ENCODE measurements at regions of chr3 and their contacts with region 1.

Region 1: GRCh38 chr3:169218314-169218983 is 445.1 kb downstream of the MECOM start:
- DNase-seq: peak; percentile 67
- H3K4me3 ChIP-seq: no peak overlapping the region
- H3K4me3 Mint-ChIP-seq: no peak overlapping the region
- H3K27ac Mint-ChIP-seq: no peak overlapping the region
- H3K4me1 ChIP-seq: no peaks in the 10 kb centered on the region
- H3K4me1 Mint-ChIP-seq: no peaks in the 10 kb centered on the region
- H3K27me3 ChIP-seq: no peaks in the 10 kb centered on the region
- H3K27me3 Mint-ChIP-seq: no peaks in the 10 kb centered on the region
- CTCF ChIP-seq: peak; percentile 51 to 79

Region 2: GRCh38 chr3:169232863-169233262 is 14.4 kb after region 1 on chr3:
- CTCF ChIA-PET with region 1: no interaction called
- POLR2A ChIA-PET with region 1: no interaction called
- intact Hi-C with region 1: no loop called
- DNase-seq: no peak
- H3K4me3 ChIP-seq: no peak overlapping the region
- H3K4me3 Mint-ChIP-seq: no peak overlapping the region
- H3K27ac Mint-ChIP-seq: no peak overlapping the region
- H3K4me1 ChIP-seq: no peaks in the 10 kb centered on the region
- H3K4me1 Mint-ChIP-seq: no peaks in the 10 kb centered on the region
- H3K27me3 ChIP-seq: no peaks in the 10 kb centered on the region
- H3K27me3 Mint-ChIP-seq: no peaks in the 10 kb centered on the region
- CTCF ChIP-seq: no peak

Region 3: GRCh38 chr3:169295126-169295525 is 76.7 kb after region 1 on chr3:
- CTCF ChIA-PET with region 1: no interaction called
- POLR2A ChIA-PET with region 1: no interaction called
- intact Hi-C with region 1: loop called (anchors 1 kb)
- DNase-seq: peak in 1 of 2 experiments; percentile 23
- H3K4me3 ChIP-seq: no peak overlapping the region
- H3K4me3 Mint-ChIP-seq: no peak overlapping the region
- H3K27ac Mint-ChIP-seq: no peak overlapping the region
- H3K4me1 ChIP-seq: no peaks in the 10 kb centered on the region
- H3K4me1 Mint-ChIP-seq: peaks cover 23% of the 10 kb centered on the region
- H3K27me3 ChIP-seq: no peaks in the 10 kb centered on the region
- H3K27me3 Mint-ChIP-seq: no peaks in the 10 kb centered on the region
- CTCF ChIP-seq: peak; percentile 19 to 43

Region 4: DNA sequence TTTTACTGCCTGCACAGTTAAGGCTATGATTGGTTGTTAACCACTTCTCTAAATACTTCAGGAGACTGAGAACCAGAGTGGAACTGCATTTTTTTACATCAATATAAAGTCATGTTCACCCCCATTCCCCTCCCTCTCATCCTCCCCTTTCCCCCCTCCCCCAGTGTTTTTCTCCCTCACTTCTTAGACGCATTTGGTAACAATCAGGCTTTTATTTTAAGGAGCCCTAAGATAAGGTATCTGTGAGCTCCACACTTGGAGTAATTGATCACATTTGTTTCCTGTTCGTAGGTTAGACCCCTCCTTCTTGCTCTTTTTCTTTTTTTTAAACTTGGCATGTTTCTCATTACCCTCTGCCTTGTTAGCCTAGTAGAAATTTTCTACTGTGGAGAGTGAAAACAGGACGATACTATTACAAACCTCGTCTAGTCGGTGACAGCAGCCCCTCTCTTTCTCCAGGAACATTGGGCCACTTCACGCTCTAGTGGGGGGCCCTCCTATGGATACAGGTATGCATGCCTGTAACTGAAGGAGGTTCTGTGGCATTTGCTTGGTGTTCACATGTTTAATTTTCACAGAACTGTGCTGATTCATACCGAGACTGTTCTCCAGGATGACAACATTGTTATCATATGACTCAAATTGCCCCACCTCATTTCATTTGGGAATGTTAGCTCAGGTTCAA is 130.6 kb after region 1 on chr3:
- CTCF ChIA-PET with region 1: no interaction called
- POLR2A ChIA-PET with region 1: no interaction called
- intact Hi-C with region 1: loop called (anchors 5 kb)
- DNase-seq: no peak
- H3K4me3 ChIP-seq: no peak overlapping the region
- H3K4me3 Mint-ChIP-seq: peak overlapping the region; percentile 55
- H3K27ac Mint-ChIP-seq: peak overlapping the region; percentile 39
- H3K4me1 ChIP-seq: peaks cover 18% of the 10 kb centered on the region
- H3K4me1 Mint-ChIP-seq: peaks cover 2% of the 10 kb centered on the region
- H3K27me3 ChIP-seq: no peaks in the 10 kb centered on the region
- H3K27me3 Mint-ChIP-seq: no peaks in the 10 kb centered on the region
- CTCF ChIP-seq: no peak

Region 5: GRCh38 chr3:169552533-169552932 is 334.1 kb after region 1 on chr3:
- CTCF ChIA-PET with region 1: no interaction called
- POLR2A ChIA-PET with region 1: no interaction called
- intact Hi-C with region 1: no loop called
- DNase-seq: no peak
- H3K4me3 ChIP-seq: no peak overlapping the region
- H3K4me3 Mint-ChIP-seq: no peak overlapping the region
- H3K27ac Mint-ChIP-seq: no peak overlapping the region
- H3K4me1 ChIP-seq: no peaks in the 10 kb centered on the region
- H3K4me1 Mint-ChIP-seq: peaks cover 6% of the 10 kb centered on the region
- H3K27me3 ChIP-seq: no peaks in the 10 kb centered on the region
- H3K27me3 Mint-ChIP-seq: no peaks in the 10 kb centered on the region
- CTCF ChIP-seq: no peak

Region 6: DNA sequence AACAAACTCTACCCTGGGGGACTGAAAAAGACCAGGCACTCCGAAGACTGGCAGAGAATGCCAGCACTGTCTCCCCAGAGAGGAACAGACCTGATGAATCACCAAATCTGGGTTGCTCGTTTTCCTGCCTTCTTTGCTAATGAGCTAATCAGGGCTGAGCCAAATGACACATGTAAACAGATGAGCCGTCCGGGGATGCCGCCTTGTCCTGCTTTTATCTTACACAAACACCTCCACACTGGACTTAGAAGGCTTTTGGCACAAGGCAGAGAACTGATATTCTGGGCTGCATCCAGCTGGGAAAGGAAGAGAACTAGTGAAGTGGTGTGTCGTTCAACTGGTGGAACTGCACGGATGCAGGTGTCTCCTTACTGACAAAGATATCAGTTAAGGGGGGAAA is 356.9 kb after region 1 on chr3:
- CTCF ChIA-PET with region 1: no interaction called
- POLR2A ChIA-PET with region 1: no interaction called
- intact Hi-C with region 1: loop called (anchors 10 kb)
- DNase-seq: no peak
- H3K4me3 ChIP-seq: no peak overlapping the region
- H3K4me3 Mint-ChIP-seq: no peak overlapping the region
- H3K27ac Mint-ChIP-seq: no peak overlapping the region
- H3K4me1 ChIP-seq: no peaks in the 10 kb centered on the region
- H3K4me1 Mint-ChIP-seq: no peaks in the 10 kb centered on the region
- H3K27me3 ChIP-seq: no peaks in the 10 kb centered on the region
- H3K27me3 Mint-ChIP-seq: no peaks in the 10 kb centered on the region
- CTCF ChIP-seq: no peak